Esophagus muscularis mucosa (tissue), 4 donors: ENCODE measurements at regions of chr22 and their contacts with region 1.

Region 1: DNA sequence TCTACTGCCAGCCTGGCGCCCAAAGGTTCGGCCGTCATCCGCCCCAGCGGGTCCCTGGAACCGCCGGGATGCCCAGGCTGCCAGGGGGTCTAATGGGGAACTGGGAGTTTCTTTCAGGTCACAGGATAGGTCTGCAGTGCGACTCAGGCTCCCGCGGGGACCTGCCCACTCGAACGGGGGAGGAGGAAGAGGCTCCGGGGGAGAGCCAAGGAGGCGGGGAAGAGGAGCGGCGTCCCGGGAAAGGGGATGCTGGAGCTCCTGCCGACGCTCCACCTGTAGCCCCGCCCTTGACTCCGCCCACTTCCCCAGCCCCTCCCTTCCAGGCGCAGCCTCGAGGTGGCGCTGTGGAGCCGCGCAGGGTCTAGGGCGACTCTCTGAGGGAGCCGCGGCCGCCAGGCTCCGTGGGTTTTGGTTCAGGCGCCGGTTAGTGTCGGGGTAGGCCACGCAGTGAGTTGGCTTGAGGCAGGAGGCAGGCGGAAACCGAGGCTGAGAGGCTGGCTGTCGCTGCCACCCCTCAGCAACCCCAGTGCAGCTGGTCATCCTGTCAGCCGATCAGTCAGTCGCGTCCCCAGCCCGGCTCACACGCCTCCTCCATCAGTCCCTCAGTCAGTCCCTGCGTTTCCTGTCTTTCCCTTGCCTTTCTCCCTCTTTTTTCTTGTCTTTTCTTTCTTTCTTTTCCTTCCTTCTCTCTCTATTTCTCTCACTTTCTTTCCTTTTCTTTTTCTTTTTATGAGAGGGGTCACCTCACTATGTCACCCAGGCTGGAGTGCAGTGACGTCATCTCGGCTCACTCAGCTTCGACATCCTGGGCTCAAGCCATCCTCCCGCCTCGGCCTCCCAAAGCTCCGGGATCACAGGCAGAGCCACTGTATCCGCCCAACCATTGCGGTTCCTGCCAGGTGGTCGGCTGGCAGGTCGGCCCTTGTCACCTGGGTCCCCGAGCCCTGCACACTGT is 26.4 kb downstream of the YWHAH start:
- DNase-seq: no peak
- H3K4me3 ChIP-seq: peak overlapping the region; percentile 47 to 58 (median 48)
- H3K27ac ChIP-seq: peak overlapping the region in 1 of 4 donors; percentile 33
- H3K4me1 ChIP-seq: peaks cover 5 to 13% (median 13%) of the 10 kb centered on the region in 4 donors
- H3K27me3 ChIP-seq: no peaks in the 10 kb centered on the region
- CTCF ChIP-seq: peak; percentile 83 to 88 (median 87)
- EP300 ChIP-seq: no peak
- POLR2A ChIP-seq: no peak

Region 2: GRCh38 chr22:31872209-31872608 is 98.6 kb before region 1 on chr22:
- intact Hi-C with region 1: loop called (anchors 10 kb)
- DNase-seq: no peak
- H3K4me3 ChIP-seq: no peak overlapping the region
- H3K27ac ChIP-seq: no peak overlapping the region
- H3K4me1 ChIP-seq: no peaks in the 10 kb centered on the region
- H3K27me3 ChIP-seq: no peaks in the 10 kb centered on the region
- CTCF ChIP-seq: peak in 1 of 3 experiments; percentile 23
- EP300 ChIP-seq: no peak
- POLR2A ChIP-seq: no peak

Region 3: DNA sequence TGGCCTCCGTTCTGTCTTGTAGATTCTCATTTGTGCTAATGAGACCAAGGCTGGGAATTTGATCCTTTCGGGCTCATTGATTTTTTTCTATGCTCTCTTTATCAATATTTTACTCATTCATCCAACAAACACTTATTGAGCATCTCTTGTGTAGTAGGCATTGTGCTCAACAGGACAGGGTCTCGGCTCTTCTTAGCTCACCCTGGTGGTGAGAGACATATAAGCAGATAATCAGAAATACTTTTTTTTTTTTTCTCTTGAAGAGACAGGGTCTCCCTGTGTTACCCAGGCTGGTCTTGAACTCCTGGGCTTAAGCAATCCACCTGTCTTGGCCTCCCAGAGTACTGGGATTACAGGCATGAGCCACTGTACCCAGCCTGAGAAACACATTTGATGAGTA is 24.3 kb after region 1 on chr22:
- intact Hi-C with region 1: no loop called
- DNase-seq: no peak
- H3K4me3 ChIP-seq: no peak overlapping the region
- H3K27ac ChIP-seq: no peak overlapping the region
- H3K4me1 ChIP-seq: no peaks in the 10 kb centered on the region
- H3K27me3 ChIP-seq: peaks cover 0 to 19% (median 0%) of the 10 kb centered on the region in 4 donors
- CTCF ChIP-seq: no peak
- EP300 ChIP-seq: no peak
- POLR2A ChIP-seq: no peak

Region 4: DNA sequence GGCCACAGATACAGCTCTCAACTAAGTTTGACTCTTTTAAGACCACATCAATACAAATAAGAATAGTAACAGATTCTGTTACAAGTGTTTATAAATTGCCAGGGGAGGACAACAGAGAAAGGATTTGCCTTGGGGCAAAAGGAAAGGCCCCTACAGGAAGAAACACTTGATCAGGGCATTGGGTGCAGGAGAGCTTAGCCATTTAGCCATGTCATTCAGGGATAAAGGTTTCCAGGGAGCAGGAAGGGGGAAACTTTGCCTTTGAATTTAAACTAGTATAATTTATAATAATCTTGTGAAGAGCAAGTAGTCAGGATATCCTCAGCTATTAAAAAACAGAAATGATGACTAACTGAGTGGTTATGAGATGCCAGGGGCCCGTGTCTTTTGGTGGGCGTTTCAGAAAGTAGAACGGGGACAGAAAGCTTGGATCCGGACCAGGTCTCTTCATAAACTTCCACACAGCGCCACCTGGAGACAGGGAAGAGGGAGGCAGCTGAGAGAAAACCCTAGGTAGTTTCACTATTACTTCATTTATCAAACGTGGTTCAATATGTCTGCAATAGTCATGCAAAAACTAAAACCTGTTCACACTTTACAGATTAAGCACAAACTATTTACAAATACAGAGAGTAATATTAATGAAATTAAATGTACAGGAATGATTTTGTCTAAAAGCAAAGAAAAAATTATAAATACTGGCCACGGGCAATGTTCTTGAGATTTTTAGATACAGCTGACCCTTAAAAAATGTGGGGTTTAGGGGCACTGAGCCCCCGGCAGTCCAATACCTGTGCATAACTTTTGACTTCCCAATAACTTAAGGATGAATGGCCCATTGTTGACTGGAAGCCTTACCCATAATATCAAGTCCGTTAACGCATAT is 295.4 kb after region 1 on chr22:
- intact Hi-C with region 1: loop called (anchors 2 kb)
- DNase-seq: no peak
- H3K4me3 ChIP-seq: peak overlapping the region in 2 of 4 donors; percentile 2 to 3
- H3K27ac ChIP-seq: no peak overlapping the region
- H3K4me1 ChIP-seq: peaks cover 0 to 5% (median 5%) of the 10 kb centered on the region in 4 donors
- H3K27me3 ChIP-seq: peaks cover 0 to 5% (median 0%) of the 10 kb centered on the region in 4 donors
- CTCF ChIP-seq: peak; percentile 80 to 86 (median 85)
- EP300 ChIP-seq: no peak
- POLR2A ChIP-seq: no peak

Region 5: DNA sequence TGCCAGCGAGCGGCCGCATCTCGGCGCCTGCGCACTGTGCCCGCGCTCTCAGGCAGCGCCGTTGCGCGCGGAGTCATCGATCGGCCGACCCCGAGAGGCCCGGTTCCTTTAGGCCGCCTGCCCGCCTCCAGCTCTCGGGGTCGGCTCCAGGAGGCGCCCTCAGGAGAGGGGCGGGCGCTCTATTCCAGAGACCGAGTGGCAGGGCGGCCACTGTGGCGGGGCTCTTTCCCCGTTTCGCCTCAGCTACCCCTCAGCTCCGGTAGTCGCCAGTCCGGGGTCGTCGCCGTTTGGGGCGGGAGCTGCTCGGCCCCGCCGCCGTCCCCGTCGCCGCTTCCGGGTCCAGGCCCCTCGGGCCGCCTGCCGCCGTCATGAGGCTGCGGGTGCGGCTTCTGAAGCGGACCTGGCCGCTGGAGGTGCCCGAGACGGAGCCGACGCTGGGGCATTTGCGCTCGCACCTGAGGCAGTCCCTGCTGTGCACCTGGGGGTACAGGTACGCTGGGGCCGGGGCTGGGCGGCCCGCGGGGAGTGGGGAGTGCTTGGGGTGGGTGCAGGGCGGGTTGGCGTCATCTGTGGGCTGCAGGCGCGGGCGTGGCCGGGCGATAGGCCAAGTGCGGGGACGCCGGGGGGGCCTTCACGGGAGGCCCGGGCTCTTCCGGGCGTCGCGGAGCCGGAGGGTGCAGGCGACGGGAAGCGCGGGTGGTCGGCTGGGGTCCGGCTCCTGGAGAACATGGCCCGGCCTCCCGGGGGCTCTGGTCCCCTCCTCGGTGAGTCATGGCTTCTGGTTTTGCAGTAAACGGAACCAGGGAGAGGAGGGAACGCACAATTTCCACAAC is 504.1 kb after region 1 on chr22 and contains the start of gene FBXO7:
- intact Hi-C with region 1: loop called (anchors 5 kb)
- DNase-seq: peak; percentile 93
- H3K4me3 ChIP-seq: peak within 1 kb of the TSS; percentile 89 to 97 (median 93)
- H3K27ac ChIP-seq: peak within 1 kb of the TSS; percentile 99 to 100 (median 99)
- H3K4me1 ChIP-seq: peaks cover 25 to 52% (median 43%) of the 10 kb centered on the region in 4 donors
- H3K27me3 ChIP-seq: no peaks in the 10 kb centered on the region
- CTCF ChIP-seq: peak; percentile 34 to 56 (median 49)
- EP300 ChIP-seq: no peak
- POLR2A ChIP-seq: peak; percentile 29
- total RNA-seq, gene FBXO7: 73.6 to 91.4 (median 83.8) TPM